Activated CD4-positive, alpha-beta T cell treated with anti-CD3 and anti-CD28 coated beads, Interleukin-2, amount 10 ng/mL, durations not matched to agents 24 days and 14 days (primary cell): ENCODE measurements at regions of chr11 and their contacts with region 1.

Region 1: GRCh38 chr11:110376711-110377324 is 52.9 kb upstream of the FDX1 start:
- DNase-seq: peak; percentile 82
- H3K4me3 Mint-ChIP-seq: no peak overlapping the region
- H3K27ac Mint-ChIP-seq: no peak overlapping the region
- H3K4me1 Mint-ChIP-seq: peaks cover 24% of the 10 kb centered on the region
- H3K27me3 Mint-ChIP-seq: no peaks in the 10 kb centered on the region

Region 2: DNA sequence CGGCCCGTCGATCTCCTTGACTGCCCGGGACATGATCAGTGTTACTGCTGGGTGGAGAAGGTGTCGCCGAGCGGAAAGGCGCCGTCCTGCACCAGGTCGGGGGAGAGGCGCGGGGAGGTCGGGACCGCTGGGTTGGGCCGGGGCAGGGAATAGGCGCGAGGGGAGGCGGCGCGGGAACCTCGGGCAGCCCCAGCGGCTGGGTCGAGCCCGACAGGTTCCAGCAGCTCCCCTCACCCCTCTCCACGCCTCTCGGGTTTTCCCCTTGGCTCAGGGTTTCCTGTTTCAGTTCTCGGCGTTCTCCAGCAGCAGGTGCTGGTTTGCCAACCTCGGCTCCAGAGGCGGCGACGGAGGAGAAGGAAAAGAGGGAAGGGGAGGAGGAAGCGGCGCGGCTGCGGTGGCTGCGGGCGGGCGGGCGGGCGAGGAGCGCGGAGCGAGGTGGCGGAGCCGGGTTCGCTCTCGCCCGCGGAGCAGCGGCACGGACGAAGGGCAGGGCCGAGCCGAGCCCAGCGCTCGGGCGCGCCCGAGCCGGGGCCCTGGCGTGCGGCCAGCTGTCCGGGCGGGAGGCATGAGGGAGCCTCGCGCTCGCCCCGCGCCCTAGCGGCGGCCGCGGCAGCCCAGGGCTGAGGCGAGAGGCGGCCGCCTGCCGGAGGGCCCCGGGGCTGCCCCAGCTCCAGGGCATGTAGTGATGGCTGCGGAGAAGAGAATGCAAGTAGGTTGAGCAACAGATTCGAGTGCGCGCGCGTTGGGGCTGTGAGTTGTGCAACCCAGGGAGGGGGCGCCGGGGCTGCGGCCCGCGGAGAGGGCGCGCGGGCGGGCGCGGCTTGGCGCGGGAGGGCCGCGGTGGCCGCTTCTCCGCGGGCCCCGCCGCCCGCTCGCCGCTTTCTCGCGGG is 284.1 kb before region 1 on chr11 and contains the start of gene ZC3H12C:
- intact Hi-C with region 1: loop called (anchors 5 kb)
- DNase-seq: peak; percentile 86
- H3K4me3 Mint-ChIP-seq: peak within 1 kb of the TSS; percentile 88
- H3K27ac Mint-ChIP-seq: peak within 1 kb of the TSS; percentile 95
- H3K4me1 Mint-ChIP-seq: peaks cover 18% of the 10 kb centered on the region
- H3K27me3 Mint-ChIP-seq: peaks cover 53% of the 10 kb centered on the region
- total RNA-seq, gene ZC3H12C: 6.7 and 7.5 TPM in 2 replicates

Region 3: DNA sequence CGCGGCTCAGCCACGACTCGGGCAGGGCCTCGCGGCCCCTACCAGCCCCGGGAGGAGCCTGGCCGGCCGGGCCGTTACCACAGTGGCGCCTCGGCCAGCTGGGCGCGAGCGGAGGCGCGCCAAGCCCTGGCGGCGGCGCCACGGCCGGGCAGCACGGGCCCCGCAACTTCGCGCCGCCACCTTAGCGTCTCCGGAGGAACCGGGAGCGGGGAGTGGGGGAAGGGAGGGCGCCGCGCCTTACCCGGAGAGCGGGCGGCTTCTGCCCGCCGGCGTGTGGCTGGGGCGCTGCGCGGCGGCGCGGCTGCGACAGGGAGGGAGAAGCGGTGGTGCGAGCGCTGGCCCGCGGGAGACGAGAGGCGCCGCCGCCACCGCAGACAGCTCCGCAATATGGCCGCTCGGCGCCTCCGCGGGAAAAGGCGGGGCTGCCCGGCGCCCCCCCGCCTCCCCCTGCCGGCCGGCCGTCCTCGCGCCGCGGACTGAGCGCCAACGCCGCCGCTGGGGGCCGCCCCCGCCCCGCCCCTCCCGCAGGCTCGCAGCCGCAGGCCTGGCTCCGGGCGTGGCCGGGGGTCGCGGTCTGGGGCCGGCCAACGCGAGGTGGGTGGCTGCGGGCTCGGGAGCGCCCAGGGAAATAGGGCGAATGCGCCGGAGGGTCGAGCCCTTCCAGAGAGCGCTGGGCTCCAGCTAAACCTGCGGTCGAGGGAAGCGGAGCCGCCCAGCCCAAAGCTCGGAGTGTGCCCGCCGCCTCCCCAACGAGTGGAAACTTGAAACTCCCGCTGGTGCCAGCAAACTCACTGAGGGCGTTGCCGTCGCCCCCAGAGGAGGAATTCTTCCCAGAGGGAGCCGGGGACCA is 80.4 kb before region 1 on chr11 and contains the start of gene RDX:
- intact Hi-C with region 1: loop called (anchors 1 kb)
- DNase-seq: peak; percentile 90
- H3K4me3 Mint-ChIP-seq: peak within 1 kb of the TSS; percentile 97
- H3K27ac Mint-ChIP-seq: peak within 1 kb of the TSS; percentile 91
- H3K4me1 Mint-ChIP-seq: peaks cover 38% of the 10 kb centered on the region
- H3K27me3 Mint-ChIP-seq: no peaks in the 10 kb centered on the region
- total RNA-seq, gene RDX: 87.6 and 88.4 TPM in 2 replicates

Region 4: DNA sequence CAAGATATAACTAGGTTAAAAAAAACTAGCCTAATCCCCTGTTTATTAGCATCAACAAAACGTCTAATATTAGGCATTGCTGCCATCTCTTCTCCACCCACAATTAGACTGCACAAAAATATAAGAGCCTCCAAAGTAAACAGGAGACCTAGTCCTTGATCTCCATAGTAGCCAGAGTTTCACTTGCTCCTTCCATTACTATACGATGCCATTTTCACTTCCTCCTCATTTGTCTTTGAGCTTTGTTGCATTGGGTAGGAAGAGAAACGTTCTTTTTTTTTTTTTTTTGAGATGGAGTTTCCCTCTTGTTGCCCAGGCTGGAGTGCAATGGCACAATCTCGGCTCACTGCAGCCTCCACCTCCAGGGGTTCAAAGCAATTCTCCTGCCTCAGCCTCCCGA is 38.1 kb before region 1 on chr11:
- intact Hi-C with region 1: no loop called
- DNase-seq: no peak
- H3K4me3 Mint-ChIP-seq: no peak overlapping the region
- H3K27ac Mint-ChIP-seq: peak overlapping the region; percentile 35
- H3K4me1 Mint-ChIP-seq: peaks cover 25% of the 10 kb centered on the region
- H3K27me3 Mint-ChIP-seq: no peaks in the 10 kb centered on the region

Region 5: GRCh38 chr11:110429731-110430266 is 53.0 kb after region 1 on chr11 and contains the start of gene FDX1:
- intact Hi-C with region 1: loop called (anchors 1 kb)
- DNase-seq: peak; percentile 95
- H3K4me3 Mint-ChIP-seq: peak within 1 kb of the TSS; percentile 99
- H3K27ac Mint-ChIP-seq: peak within 1 kb of the TSS; percentile 98
- H3K4me1 Mint-ChIP-seq: peaks cover 39% of the 10 kb centered on the region
- H3K27me3 Mint-ChIP-seq: no peaks in the 10 kb centered on the region
- total RNA-seq, gene FDX1: 14.2 and 16.4 TPM in 2 replicates

Region 6: GRCh38 chr11:111230122-111230465 is 853.3 kb after region 1 on chr11:
- intact Hi-C with region 1: loop called (anchors 5 kb)
- DNase-seq: no peak
- H3K4me3 Mint-ChIP-seq: peak overlapping the region; percentile 68
- H3K27ac Mint-ChIP-seq: no peak overlapping the region
- H3K4me1 Mint-ChIP-seq: peaks cover 18% of the 10 kb centered on the region
- H3K27me3 Mint-ChIP-seq: peaks cover 26% of the 10 kb centered on the region